ENCODE measurements at regions of chr2 and their contacts with region 1.

Region 1: GRCh38 chr2:231854671-231855070 is 68.4 kb downstream of the COPS7B start:
- DNase-seq: no peak
- ATAC-seq: no peak
- H3K4me3 ChIP-seq: no peak overlapping the region
- H3K27ac ChIP-seq: no peak overlapping the region
- H3K4me1 ChIP-seq: no peaks in the 10 kb centered on the region
- CTCF ChIP-seq: no peak
- EP300 ChIP-seq: no peak
- POLR2A ChIP-seq: no peak
- RAD21 ChIP-seq: no peak

Region 2: DNA sequence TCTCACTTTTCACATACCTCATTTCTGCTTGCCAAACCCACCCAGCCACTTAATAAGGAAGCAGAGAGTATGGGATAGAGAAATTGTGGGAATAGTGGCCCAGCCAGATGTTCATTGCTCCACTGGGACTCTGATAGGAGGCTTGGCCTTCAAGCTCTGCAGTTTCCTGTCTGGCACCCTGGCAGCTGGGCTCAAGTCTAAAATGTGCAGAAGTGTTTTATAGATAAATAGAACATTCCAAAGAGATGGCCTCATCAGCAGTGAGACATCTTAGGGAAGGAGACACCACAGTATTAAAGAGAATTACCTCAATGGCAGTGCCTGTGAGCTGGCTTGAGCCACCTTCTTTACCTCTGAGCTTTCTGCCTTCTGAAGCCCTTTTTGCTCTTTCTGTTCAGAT is 43.8 kb before region 1 on chr2:
- CTCF ChIA-PET with region 1: interaction called, 12 read pairs
- POLR2A ChIA-PET with region 1: no interaction called
- DNase-seq: no peak
- ATAC-seq: peak; percentile 31 to 47; a peak in 3 of 6 replicates
- H3K4me3 ChIP-seq: no peak overlapping the region
- H3K27ac ChIP-seq: no peak overlapping the region
- H3K4me1 ChIP-seq: peaks cover 9% of the 10 kb centered on the region; the same call in 2 of the 3 replicates
- CTCF ChIP-seq: no peak
- EP300 ChIP-seq: no peak
- POLR2A ChIP-seq: no peak
- RAD21 ChIP-seq: no peak

Region 3: GRCh38 chr2:232117413-232117812 is 262.7 kb after region 1 on chr2:
- CTCF ChIA-PET with region 1: no interaction called
- POLR2A ChIA-PET with region 1: no interaction called
- DNase-seq: peak in 1 of 2 experiments; percentile 7
- ATAC-seq: peak in 1 of 2 experiments; percentile 25; a peak in 1 of 6 replicates
- H3K4me3 ChIP-seq: no peak overlapping the region
- H3K27ac ChIP-seq: no peak overlapping the region
- H3K4me1 ChIP-seq: no peaks in the 10 kb centered on the region
- CTCF ChIP-seq: no peak
- EP300 ChIP-seq: no peak
- POLR2A ChIP-seq: no peak
- RAD21 ChIP-seq: no peak

Region 4: GRCh38 chr2:232204457-232204931 is 349.8 kb after region 1 on chr2:
- CTCF ChIA-PET with region 1: no interaction called
- POLR2A ChIA-PET with region 1: no interaction called
- DNase-seq: no peak
- ATAC-seq: no peak
- H3K4me3 ChIP-seq: no peak overlapping the region
- H3K27ac ChIP-seq: no peak overlapping the region
- H3K4me1 ChIP-seq: peaks cover 10% of the 10 kb centered on the region; the same call in 2 of the 3 replicates
- CTCF ChIP-seq: no peak
- EP300 ChIP-seq: no peak
- POLR2A ChIP-seq: no peak
- RAD21 ChIP-seq: no peak

Region 5: GRCh38 chr2:232420463-232421188 is 566.0 kb after region 1 on chr2:
- CTCF ChIA-PET with region 1: no interaction called
- POLR2A ChIA-PET with region 1: no interaction called
- DNase-seq: peak; percentile 25 to 29
- ATAC-seq: peak; percentile 58 to 75
- H3K4me3 ChIP-seq: peak overlapping the region; percentile 46
- H3K27ac ChIP-seq: peak overlapping the region; percentile 34 to 68; a peak in 5 of 6 replicates
- H3K4me1 ChIP-seq: no peaks in the 10 kb centered on the region
- CTCF ChIP-seq: no peak
- EP300 ChIP-seq: no peak
- POLR2A ChIP-seq: no peak
- RAD21 ChIP-seq: 0 out of 5 replicates have a peak, but pooled peaks of 1 of the 2 experiments have one; percentile 13

Measured in A549 (cell line).